Psoas muscle (tissue), 8 donors: ENCODE measurements at regions of chr5 and their contacts with region 1.

Region 1: GRCh38 chr5:67089200-67089725 is 107.3 kb downstream of the CD180 start:
- DNase-seq: peak in 1 of 2 donors; percentile 13
- ATAC-seq: no peak
- H3K4me3 ChIP-seq: no peak overlapping the region
- H3K27ac ChIP-seq: no peak overlapping the region
- H3K4me1 ChIP-seq: peaks cover 26% of the 10 kb centered on the region
- H3K27me3 ChIP-seq: no peaks in the 10 kb centered on the region
- CTCF ChIP-seq: no peak

Region 2: GRCh38 chr5:66351813-66352212 is 737.5 kb before region 1 on chr5:
- intact Hi-C with region 1: no loop called
- DNase-seq: no peak
- ATAC-seq: no peak
- H3K4me3 ChIP-seq: no peak overlapping the region
- H3K27ac ChIP-seq: no peak overlapping the region
- H3K4me1 ChIP-seq: no peaks in the 10 kb centered on the region
- H3K27me3 ChIP-seq: peaks cover 0 to 3% (median 0%) of the 10 kb centered on the region in 3 donors
- CTCF ChIP-seq: no peak

Region 3: GRCh38 chr5:67047160-67047559 is 42.1 kb before region 1 on chr5:
- intact Hi-C with region 1: loop called in 1 of 2 experiments (anchors 5 kb)
- DNase-seq: peak; percentile 39 to 63
- ATAC-seq: peak; percentile 71 to 90 (median 76)
- H3K4me3 ChIP-seq: no peak overlapping the region
- H3K27ac ChIP-seq: peak overlapping the region; percentile 48
- H3K4me1 ChIP-seq: peaks cover 64% of the 10 kb centered on the region
- H3K27me3 ChIP-seq: no peaks in the 10 kb centered on the region
- CTCF ChIP-seq: no peak

Region 4: DNA sequence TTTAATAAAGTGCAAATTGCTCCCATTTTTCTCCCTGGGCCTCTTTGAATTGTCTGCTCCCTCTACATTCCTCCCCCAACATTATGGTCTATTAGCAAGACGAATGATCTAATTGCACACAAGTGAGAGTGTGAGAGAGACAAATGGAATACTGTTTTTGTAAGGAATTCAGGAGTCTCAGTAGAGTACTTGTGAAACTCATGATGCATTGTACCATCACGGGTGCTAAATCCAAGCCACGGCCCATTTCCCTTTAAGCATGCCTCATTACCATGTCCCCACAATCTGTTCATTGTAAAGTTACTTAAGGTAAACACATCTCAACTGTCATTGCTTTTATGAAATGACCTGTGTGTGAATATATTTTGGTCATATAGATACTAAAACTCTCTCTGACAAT is 44.5 kb after region 1 on chr5:
- intact Hi-C with region 1: no loop called
- DNase-seq: no peak
- ATAC-seq: no peak
- H3K4me3 ChIP-seq: no peak overlapping the region
- H3K27ac ChIP-seq: no peak overlapping the region
- H3K4me1 ChIP-seq: no peaks in the 10 kb centered on the region
- H3K27me3 ChIP-seq: no peaks in the 10 kb centered on the region
- CTCF ChIP-seq: no peak